ENCODE measurements at regions of chr4 and their contacts with region 1.

Region 1: DNA sequence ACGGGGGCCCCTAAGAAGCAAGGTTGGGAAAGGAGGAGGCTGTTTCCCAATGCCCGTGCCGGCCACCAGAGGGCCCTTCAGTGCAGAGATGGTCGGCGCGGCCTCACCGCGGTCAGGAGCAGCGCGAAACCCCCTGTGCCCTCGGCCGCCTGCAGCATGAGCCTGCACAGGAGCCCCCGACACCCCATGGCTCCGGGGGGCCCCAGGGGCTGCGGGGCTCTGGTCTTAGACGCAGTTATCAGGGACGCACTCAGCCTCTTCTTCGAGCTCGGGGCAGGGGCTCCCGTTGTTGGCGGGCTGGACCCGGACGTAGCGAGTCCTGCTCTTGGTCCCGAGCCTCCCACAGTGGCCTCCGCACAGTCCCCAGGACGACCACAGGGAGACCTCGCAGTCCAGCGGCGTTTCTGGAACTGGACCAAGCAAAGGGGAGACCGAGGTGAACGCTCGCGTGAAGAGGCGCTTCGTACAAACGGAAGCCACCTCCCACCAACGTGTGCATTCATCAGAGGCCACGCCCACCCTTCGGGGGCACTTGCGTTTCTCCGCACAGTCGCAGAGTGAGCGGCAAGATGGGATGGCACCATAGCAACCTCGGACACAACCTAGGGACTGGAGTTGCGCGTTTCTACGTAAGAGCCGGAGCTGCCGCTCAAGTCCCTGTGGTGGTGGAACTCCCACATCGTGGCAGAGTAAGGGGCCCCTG is 5.0 kb downstream of the SPON2 start:
- DNase-seq: no peak
- H3K4me3 ChIP-seq: peak overlapping the region; percentile 43 to 76 (median 62)
- H3K27ac ChIP-seq: peak overlapping the region; percentile 54 to 77 (median 74)
- H3K4me1 ChIP-seq: peaks cover 31 to 59% (median 33%) of the 10 kb centered on the region in 3 donors
- H3K27me3 ChIP-seq: peaks cover 0 to 33% (median 3%) of the 10 kb centered on the region in 4 donors
- CTCF ChIP-seq: peak; percentile 86 to 96 (median 90)
- POLR2A ChIP-seq: peak in 2 of 4 donors; percentile 18 to 55

Region 2: DNA sequence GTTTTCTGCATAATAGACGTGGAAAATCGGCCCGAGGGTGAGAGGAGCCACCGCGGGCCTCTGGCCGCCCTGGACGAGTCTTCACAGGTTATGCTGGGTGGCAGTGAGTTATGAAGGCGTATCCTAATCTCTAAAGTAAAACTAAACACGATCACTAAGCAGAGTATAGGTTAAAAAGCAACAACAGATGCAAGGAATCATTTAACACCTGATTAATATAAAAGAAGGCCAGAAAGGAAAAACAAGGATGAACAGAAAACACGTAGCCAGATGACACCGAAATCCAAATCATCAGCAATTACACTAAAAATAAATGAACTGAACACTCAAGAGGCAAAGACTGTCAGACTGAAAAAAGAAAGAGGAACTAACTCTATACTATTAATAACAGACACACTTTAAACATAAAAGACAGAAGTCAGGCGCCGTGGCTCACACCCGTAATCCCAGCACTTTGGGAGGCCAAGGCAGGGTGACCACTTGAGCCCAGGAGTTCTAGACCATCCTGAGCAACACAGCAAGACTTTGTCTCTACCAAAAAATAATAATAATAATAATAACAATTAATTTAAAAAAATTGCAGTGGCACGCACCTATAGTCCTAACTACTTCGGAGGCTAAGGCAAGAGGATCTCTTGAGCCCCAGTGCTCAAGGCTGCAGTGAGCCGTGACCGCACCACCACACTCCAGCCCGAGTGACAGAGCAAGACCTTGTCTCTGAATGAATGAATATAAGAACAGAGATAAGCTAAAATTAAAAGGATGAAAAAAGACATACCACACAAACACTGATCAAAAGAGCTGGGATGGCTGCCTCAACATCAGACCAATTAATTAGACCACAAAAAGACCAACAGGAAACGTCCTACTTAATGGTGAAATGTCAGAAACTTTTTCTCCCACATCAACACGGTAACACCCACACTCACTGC is 51.5 kb after region 1 on chr4:
- intact Hi-C with region 1: no loop called
- DNase-seq: no peak
- H3K4me3 ChIP-seq: peak overlapping the region in 1 of 4 donors; percentile 25
- H3K27ac ChIP-seq: peak overlapping the region; percentile 68 to 83 (median 76)
- H3K4me1 ChIP-seq: peaks cover 63 to 100% (median 92%) of the 10 kb centered on the region in 3 donors
- H3K27me3 ChIP-seq: no peaks in the 10 kb centered on the region
- CTCF ChIP-seq: no peak
- POLR2A ChIP-seq: no peak

Region 3: DNA sequence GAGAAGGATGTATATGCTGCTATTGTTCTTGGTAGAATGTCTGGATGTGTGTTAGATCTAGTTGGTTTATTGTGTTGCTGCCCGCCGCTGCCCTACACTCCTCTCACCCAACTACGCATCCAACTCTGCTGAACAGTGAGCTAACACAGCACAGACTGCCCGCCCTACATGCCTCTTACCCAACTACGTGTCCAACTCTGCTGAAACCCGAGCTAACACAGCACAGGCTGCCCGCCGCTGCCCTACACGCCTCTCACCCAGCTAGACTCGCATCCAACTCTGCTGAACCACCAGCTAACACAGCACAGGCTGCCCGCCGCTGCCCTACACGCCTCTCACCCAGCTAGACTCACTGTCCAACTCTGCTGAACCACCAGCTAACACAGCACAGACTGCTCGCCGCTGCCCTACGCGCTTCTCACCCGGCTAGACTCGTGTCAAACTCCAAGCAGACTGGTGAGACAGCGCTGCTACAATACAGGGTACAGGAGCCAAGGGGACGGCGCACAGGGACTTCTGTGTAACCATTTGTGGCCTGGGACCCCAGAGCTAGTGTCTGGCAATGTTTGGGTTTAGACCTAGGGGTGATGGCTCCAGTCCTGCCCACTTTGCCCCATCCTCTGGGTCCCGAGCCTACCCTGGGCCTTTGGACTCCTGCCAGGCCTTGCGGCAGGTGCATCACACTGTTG is 93.2 kb after region 1 on chr4:
- intact Hi-C with region 1: loop called (anchors 10 kb)
- DNase-seq: no peak
- H3K4me3 ChIP-seq: no peak overlapping the region
- H3K27ac ChIP-seq: no peak overlapping the region
- H3K4me1 ChIP-seq: no peaks in the 10 kb centered on the region
- H3K27me3 ChIP-seq: no peaks in the 10 kb centered on the region
- CTCF ChIP-seq: no peak
- POLR2A ChIP-seq: no peak

Region 4: DNA sequence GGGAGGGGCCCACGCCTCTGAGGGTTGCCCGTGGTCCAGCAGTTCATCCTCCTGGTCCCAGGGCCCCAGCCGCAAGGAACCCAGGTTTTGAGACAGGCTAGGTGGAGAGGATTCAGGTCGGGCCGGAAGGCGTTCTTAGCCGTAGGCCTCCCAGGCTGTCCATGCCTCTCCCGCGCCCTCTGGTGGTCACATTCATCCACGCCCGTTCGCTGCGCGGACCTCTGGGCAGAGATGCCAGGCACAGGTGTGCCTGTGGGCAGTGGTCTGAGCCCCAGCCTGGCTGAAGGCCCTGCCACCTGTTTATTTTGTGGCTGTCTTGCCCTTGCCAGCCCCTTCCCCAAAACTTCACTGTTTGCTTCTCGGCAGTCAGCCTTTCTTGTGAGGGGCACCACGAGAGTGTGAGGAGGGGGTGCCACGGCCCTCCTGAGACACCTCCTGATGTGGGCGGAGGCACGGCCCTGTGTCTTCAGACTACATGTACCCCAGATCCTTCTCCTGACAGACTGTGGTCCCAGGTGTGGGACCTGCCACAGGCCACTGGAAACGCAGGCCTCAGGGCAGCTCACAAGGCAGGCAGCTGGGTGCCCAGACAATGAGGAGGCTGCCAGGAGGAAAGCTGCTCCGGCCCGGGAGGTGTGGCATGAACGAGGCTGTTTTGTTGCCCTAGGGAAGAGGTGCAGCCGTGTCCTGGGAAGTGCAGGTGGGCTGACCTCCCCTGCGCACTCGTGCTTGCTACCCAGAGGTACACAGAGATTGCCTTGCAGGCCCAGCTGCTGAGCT is 184.6 kb after region 1 on chr4:
- intact Hi-C with region 1: no loop called
- DNase-seq: no peak
- H3K4me3 ChIP-seq: no peak overlapping the region
- H3K27ac ChIP-seq: peak overlapping the region in 3 of 4 donors; percentile 31 to 52 (median 36)
- H3K4me1 ChIP-seq: peaks cover 10 to 45% (median 19%) of the 10 kb centered on the region in 3 donors
- H3K27me3 ChIP-seq: no peaks in the 10 kb centered on the region
- CTCF ChIP-seq: peak; percentile 89 to 97 (median 92)
- POLR2A ChIP-seq: no peak

Measured in esophagus squamous epithelium (tissue), 5 donors.